Breast epithelium (tissue), 4 donors: ENCODE measurements at regions of chr22 and their contacts with region 1.

Region 1: DNA sequence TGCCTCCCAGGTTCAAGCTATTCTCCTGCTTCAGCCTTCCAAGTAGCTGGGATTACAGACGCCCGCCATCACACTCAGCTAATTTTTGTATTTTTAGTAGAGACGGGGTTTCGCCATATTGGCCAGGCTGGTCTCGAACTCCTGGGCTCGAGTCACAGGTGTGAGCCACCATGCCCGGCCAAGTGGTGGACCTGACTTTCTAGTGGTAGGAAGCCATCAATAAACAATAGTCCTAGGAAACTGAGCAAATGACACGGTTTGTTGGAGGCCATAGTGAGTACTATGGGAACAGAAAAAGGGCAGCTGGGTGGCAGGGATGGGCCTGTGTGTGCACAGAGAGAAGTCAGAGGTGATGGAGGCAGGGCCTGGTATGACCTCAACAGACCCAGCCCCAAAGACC is 2.3 kb downstream of the KDELR3 start:
- DNase-seq: no peak
- H3K4me3 ChIP-seq: no peak overlapping the region
- H3K27ac ChIP-seq: no peak overlapping the region
- H3K4me1 ChIP-seq: no peaks in the 10 kb centered on the region
- H3K27me3 ChIP-seq: no peaks in the 10 kb centered on the region
- CTCF ChIP-seq: no peak
- POLR2A ChIP-seq: no peak

Region 2: DNA sequence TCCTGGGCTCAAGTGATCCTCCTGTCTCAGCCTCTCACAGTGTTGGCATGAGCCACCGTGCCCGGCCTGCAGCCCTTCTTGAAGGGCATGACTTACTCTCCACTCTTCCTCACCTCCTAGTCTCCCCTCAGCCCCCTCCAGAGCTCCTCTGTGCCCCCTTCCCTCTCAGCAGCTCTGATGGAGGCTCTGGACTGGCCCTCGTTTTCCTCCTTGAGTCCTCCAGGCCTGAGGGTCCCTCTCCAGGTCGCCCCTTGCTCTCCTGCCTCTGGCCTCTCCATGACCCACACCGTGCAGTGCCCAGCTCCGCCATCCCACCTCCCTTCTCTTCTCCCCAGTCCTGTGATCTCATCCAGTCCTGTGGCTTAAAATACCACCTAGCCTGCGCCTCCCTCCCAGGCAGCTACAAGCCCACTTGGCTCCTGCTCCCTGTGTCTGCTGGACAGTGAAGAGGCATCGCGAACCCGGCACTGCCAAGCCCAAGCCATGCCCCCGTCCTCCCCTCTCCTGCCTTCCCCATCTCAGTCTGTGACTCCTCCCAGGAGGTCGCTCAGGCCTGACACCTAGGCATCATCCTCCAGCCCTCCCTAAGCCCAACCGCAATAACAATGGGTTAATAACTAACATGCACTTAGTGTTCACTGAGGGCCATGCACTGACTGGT is 27.1 kb before region 1 on chr22:
- intact Hi-C with region 1: loop called (anchors 1 kb)
- DNase-seq: no peak
- H3K4me3 ChIP-seq: no peak overlapping the region
- H3K27ac ChIP-seq: no peak overlapping the region
- H3K4me1 ChIP-seq: no peaks in the 10 kb centered on the region
- H3K27me3 ChIP-seq: peaks cover 0 to 8% of the 10 kb centered on the region in 2 donors
- CTCF ChIP-seq: no peak
- POLR2A ChIP-seq: no peak

Region 3: GRCh38 chr22:38490915-38491314 is 20.7 kb after region 1 on chr22:
- intact Hi-C with region 1: no loop called
- DNase-seq: no peak
- H3K4me3 ChIP-seq: no peak overlapping the region
- H3K27ac ChIP-seq: peak overlapping the region; percentile 38 to 42
- H3K4me1 ChIP-seq: no peaks in the 10 kb centered on the region
- H3K27me3 ChIP-seq: no peaks in the 10 kb centered on the region
- CTCF ChIP-seq: no peak
- POLR2A ChIP-seq: no peak